K562 (cell line): ENCODE measurements at regions of chr9 and their contacts with region 1.

Region 1: GRCh38 chr9:77456829-77457437 is 191.2 kb downstream of the GNA14 start:
- DNase-seq: peak; percentile 72 to 84 (median 76)
- ATAC-seq: peak; percentile 92
- H3K4me3 ChIP-seq: no peak overlapping the region
- H3K27ac ChIP-seq: no peak overlapping the region
- H3K4me1 ChIP-seq: no peaks in the 10 kb centered on the region; a peak in 1 of 5 replicates
- H3K27me3 ChIP-seq: peaks cover 0 to 17% of the 10 kb centered on the region in 2 experiments; a peak in 1 of 5 replicates
- CTCF ChIP-seq: peak; percentile 69 to 75 (median 73)
- EP300 ChIP-seq: no peak
- POLR2A ChIP-seq: no peak
- RAD21 ChIP-seq: peak; percentile 21 to 47; a peak in 2 of 4 replicates

Region 2: DNA sequence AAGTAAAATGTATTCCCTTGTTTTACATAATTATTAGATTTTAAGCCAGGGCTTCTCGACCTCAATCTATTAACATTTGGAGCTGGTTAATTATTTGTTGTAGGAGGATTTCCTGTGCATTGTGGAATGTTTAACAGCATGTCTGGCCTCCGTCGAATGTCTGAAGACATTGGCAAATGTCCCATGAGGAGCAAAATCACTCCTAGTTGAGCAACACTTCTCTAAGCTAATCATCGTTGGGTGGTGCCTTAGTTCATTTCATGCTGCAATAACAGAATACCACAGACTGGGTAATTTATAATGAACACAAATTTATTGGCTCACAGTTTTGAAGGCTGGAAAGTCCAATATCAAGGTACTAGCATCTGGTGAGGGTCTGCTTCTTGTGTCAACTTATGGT is 293.0 kb before region 1 on chr9:
- CTCF ChIA-PET with region 1: no interaction called
- POLR2A ChIA-PET with region 1: no interaction called
- in situ Hi-C with region 1: no loop called
- intact Hi-C with region 1: loop called (anchors 10 kb)
- DNase-seq: no peak
- ATAC-seq: no peak
- H3K4me3 ChIP-seq: no peak overlapping the region
- H3K27ac ChIP-seq: no peak overlapping the region
- H3K4me1 ChIP-seq: no peaks in the 10 kb centered on the region; a peak in 1 of 5 replicates
- H3K27me3 ChIP-seq: no peaks in the 10 kb centered on the region; a peak in 1 of 5 replicates
- CTCF ChIP-seq: no peak
- EP300 ChIP-seq: no peak
- POLR2A ChIP-seq: no peak
- RAD21 ChIP-seq: no peak

Region 3: DNA sequence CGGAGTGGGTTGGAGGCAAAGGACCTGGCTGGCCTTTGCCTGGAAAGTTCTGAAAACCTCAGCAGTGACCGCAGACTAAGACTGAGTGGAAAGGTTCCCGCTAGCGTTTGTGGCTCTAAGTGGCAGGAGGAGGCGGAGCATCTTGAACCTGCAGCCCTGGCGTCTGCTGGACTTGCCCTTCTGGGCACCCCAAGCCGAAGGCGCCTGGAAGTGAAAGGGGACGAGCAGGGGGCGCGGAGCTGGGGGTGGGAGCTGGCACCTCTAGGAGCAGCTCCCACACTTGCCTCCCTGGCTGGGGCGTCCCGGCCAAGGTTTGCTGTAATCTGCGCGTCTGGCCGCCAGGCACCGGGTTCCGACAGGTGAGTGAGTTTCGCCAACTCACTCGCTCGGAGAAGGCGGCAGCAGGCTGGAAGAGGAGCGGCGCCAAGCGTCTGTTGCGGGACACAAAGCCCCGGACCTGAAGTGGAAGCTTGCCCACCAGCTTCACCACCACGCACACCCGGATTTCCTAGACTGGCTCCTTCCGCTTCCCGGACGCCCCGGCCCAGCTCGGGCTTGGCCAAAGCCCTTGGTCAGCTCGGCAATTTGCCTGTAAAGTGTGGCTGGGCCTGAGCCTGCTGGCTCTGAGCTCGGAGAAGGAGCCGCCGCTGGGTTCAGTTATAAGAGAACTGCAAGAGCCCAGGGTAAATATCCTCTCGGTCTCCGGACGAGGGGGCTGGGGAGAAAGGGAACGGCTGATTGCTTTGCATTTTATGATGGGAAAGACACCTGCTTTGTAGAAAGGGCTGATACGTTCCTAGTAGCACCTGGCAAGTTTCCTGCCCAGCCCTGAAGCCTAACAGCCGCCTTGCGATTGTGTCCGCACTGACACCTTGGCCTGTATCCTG is 191.5 kb after region 1 on chr9 and contains the start of gene GNA14:
- CTCF ChIA-PET with region 1: no interaction called
- POLR2A ChIA-PET with region 1: no interaction called
- in situ Hi-C with region 1: no loop called
- intact Hi-C with region 1: loop called (anchors 5 kb)
- DNase-seq: no peak
- ATAC-seq: no peak; the same call in 2 of the 3 replicates
- H3K4me3 ChIP-seq: no peak within 1 kb of the TSS
- H3K27ac ChIP-seq: no peak within 1 kb of the TSS
- H3K4me1 ChIP-seq: peaks cover 0 to 11% of the 10 kb centered on the region in 2 experiments; a peak in 2 of 5 replicates
- H3K27me3 ChIP-seq: peaks cover 13 to 34% of the 10 kb centered on the region in 2 experiments; a peak in 3 of 5 replicates
- CTCF ChIP-seq: no peak
- EP300 ChIP-seq: no peak
- POLR2A ChIP-seq: no peak
- RAD21 ChIP-seq: no peak
- polyA plus RNA-seq, gene GNA14: not detected